K562 (cell line): ENCODE measurements at regions of chr1 and their contacts with region 1.

Region 1: DNA sequence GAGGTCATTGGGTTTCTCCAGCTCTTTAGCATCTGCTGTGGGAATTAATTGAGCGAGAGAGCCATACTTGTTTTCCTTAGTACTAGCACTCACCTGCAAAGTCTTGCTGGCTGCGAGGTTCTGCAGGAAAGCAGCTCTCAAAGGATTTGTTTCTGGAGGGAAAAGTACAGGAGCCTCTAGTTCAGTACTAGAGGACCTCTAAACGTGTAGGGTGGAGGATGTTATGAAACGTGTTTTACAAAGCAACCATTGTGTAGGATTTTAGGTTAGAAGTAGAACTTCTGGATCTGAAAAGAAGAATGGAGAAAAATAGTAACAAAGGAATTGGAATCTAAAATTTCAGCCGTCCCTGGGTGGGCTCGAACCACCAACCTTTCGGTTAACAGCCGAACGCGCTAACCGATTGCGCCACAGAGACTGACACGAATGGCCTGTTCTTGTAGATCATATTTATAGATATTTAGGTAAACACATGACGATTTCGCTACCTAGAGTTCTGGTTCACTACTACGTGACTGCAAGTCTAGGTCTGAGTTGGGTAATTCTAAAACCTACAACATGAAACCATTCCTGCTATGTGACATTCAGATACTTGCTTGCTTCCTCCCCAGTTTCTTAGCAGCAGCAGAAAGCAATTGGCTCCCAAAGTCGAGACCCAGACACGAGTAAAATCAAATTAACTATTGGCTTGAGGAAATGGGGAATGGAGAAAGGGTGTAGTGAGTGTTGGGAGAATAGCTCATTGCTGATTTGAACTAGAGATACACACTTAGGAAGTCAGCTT is 60.2 kb upstream of the CFAP126 start:
- DNase-seq: peak; percentile 48 to 81 (median 56)
- ATAC-seq: peak; percentile 90
- H3K4me3 ChIP-seq: peak overlapping the region; percentile 42
- H3K27ac ChIP-seq: peak overlapping the region; percentile 76
- H3K4me1 ChIP-seq: peaks cover 0 to 4% of the 10 kb centered on the region in 2 experiments; a peak in 2 of 5 replicates
- H3K27me3 ChIP-seq: no peaks in the 10 kb centered on the region
- CTCF ChIP-seq: 0 out of 6 replicates have a peak, but pooled peaks of 1 of the 3 experiments have one; percentile 8
- EP300 ChIP-seq: peak; percentile 80
- POLR2A ChIP-seq: no peak
- RAD21 ChIP-seq: 0 out of 4 replicates have a peak, but pooled peaks of 1 of the 2 experiments have one; percentile 18

Region 2: DNA sequence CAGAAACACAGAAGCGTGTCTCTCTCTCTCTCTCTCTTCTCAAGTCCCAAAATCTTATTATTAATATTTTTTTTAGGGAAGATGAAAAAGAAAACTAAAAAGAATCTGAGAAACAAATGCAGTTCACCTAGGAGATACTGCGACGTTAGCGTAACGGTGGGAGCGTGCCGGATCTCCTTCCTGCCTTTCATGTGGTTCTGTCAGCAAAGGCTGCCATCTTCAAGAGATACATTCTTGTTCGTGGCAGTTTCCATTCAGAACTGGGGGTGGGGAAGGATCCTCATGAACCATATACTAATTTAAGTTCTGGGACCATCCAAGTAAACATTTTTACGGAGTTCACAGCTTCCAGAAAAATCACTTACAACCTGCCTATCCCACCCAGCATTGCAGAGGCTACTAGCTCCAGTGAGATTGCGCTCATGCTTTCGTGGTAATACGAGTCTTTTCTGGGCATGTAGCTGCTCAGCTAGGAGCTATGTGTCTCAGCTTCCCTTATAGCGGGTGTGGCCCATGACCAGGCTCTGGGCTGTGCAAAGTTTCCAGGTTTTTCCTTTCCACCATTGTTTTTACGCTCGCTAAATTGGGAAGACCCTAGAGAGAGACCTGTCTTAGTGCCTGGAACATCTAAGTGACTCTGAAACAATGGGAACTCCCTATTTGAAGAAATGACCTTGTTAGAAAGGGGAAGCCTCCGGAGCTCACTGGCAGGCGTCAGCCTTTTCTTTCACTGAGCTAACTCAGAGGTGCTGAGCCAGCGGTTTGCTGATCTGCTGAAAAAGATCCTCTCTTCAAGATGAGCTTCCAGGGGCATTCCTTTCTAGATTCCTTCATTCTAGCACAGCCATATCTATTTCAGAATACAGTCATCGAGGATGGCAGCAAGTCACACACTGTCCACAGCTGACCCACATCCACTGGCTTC is 798.4 kb before region 1 on chr1:
- CTCF ChIA-PET with region 1: no interaction called
- POLR2A ChIA-PET with region 1: no interaction called
- in situ Hi-C with region 1: no loop called
- intact Hi-C with region 1: no loop called
- DNase-seq: no peak
- ATAC-seq: peak; percentile 31; the same call in 2 of the 3 replicates
- H3K4me3 ChIP-seq: no peak overlapping the region
- H3K27ac ChIP-seq: no peak overlapping the region
- H3K4me1 ChIP-seq: peaks cover 15 to 48% of the 10 kb centered on the region in 2 experiments; a peak in 4 of 5 replicates
- H3K27me3 ChIP-seq: no peaks in the 10 kb centered on the region
- CTCF ChIP-seq: no peak
- EP300 ChIP-seq: no peak
- POLR2A ChIP-seq: no peak
- RAD21 ChIP-seq: no peak

Region 3: GRCh38 chr1:161359291-161359690 is 68.6 kb before region 1 on chr1:
- CTCF ChIA-PET with region 1: no interaction called
- POLR2A ChIA-PET with region 1: no interaction called
- in situ Hi-C with region 1: no loop called
- intact Hi-C with region 1: no loop called
- DNase-seq: no peak
- ATAC-seq: no peak
- H3K4me3 ChIP-seq: no peak overlapping the region
- H3K27ac ChIP-seq: no peak overlapping the region
- H3K4me1 ChIP-seq: no peaks in the 10 kb centered on the region
- H3K27me3 ChIP-seq: no peaks in the 10 kb centered on the region
- CTCF ChIP-seq: no peak
- EP300 ChIP-seq: no peak
- POLR2A ChIP-seq: no peak
- RAD21 ChIP-seq: no peak

Region 4: DNA sequence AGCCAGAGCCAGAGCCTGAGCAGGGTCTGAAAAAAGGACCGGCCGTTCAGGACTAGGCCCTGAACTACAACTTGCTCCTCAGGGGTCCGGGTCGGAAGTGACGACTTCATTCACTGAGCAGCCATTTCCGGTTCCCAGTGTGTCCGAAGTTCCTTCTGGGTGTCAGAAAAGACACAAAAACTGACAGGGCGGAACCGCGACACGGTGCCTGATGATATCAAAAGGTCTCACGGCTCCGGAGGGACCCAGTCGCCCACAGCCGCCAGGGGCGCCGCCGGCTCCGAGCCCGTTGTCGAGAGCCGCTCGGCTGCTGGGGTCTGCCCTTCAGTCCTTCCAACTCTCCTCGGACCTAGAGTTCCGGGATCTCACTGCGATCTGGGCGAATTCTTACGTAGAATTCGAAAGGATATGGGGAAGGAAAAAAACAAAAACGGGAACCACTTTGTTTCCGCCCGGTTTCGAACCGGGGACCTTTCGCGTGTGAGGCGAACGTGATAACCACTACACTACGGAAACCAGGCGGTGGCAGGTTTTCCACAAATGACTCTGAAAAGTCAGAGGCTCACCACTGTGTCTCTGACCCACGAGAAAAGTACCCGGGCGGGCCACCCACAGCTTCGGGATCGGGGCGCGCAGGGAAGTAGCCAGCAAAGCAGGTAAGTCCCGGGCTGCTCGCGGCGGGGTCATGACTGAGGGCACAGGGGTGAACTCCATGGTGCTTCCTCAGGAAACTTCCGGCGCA is 28.5 kb before region 1 on chr1:
- CTCF ChIA-PET with region 1: no interaction called
- POLR2A ChIA-PET with region 1: interaction called, 6 read pairs
- in situ Hi-C with region 1: no loop called
- intact Hi-C with region 1: loop called (anchors 1 kb)
- DNase-seq: peak; percentile 83 to 96 (median 86)
- ATAC-seq: peak; percentile 87
- H3K4me3 ChIP-seq: peak overlapping the region; percentile 67
- H3K27ac ChIP-seq: peak overlapping the region; percentile 97
- H3K4me1 ChIP-seq: peaks cover 10 to 16% of the 10 kb centered on the region in 2 experiments; a peak in 4 of 5 replicates
- H3K27me3 ChIP-seq: no peaks in the 10 kb centered on the region
- CTCF ChIP-seq: peak; percentile 68 to 87 (median 80)
- EP300 ChIP-seq: peak; percentile 70
- POLR2A ChIP-seq: peak; percentile 95
- RAD21 ChIP-seq: peak; percentile 30 to 46; a peak in 2 of 4 replicates

Region 5: GRCh38 chr1:161440312-161440894 is 12.5 kb after region 1 on chr1:
- CTCF ChIA-PET with region 1: no interaction called
- POLR2A ChIA-PET with region 1: interaction called, 20 read pairs
- in situ Hi-C with region 1: no loop called
- intact Hi-C with region 1: no loop called
- DNase-seq: peak; percentile 82 to 89 (median 86)
- ATAC-seq: peak; percentile 79
- H3K4me3 ChIP-seq: peak overlapping the region; percentile 89
- H3K27ac ChIP-seq: peak overlapping the region; percentile 90
- H3K4me1 ChIP-seq: peaks cover 5 to 18% of the 10 kb centered on the region in 2 experiments; a peak in 4 of 5 replicates
- H3K27me3 ChIP-seq: no peaks in the 10 kb centered on the region
- CTCF ChIP-seq: peak; percentile 72 to 88 (median 75)
- EP300 ChIP-seq: no peak
- POLR2A ChIP-seq: peak; percentile 51; the same call in 1 of the 2 replicates
- RAD21 ChIP-seq: peak; percentile 8 to 36; a peak in 2 of 4 replicates

Region 6: DNA sequence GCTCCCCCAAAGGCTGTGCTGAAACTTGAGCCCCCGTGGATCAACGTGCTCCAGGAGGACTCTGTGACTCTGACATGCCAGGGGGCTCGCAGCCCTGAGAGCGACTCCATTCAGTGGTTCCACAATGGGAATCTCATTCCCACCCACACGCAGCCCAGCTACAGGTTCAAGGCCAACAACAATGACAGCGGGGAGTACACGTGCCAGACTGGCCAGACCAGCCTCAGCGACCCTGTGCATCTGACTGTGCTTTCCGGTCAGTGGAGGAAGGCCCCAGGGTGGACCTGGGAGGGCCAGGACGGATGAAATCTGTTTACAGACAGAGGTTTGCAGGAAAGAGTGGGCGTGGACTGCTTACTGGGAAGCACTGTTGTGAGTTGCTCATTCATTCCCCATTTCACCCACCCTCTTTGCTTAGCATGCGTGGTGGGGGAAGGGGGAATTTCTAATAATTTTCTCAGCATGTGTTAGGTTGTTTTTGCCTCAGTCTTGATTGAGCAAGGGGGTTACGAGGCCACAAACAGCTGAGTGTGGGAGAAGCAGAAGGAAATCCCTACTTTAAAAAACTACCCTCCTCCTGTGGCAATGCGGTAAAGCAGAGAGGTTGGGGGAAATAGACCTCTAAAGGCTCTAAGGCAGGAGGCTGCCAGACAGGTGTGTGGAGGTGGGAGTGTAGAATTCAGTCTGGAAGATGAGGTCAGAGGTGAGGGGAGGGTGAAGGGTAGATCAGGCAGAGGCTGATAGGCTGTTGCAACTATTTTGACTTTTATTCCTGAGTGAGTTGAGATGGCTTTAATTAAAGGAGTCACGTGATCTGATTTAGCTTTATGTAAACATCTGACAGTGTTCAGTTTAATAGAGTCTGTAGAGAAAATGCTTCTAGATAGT is 78.7 kb after region 1 on chr1:
- CTCF ChIA-PET with region 1: no interaction called
- POLR2A ChIA-PET with region 1: no interaction called
- in situ Hi-C with region 1: no loop called
- intact Hi-C with region 1: no loop called
- DNase-seq: peak; percentile 50 to 85 (median 54)
- ATAC-seq: peak; percentile 79
- H3K4me3 ChIP-seq: peak overlapping the region; percentile 51
- H3K27ac ChIP-seq: peak overlapping the region; percentile 87
- H3K4me1 ChIP-seq: peaks cover 16 to 53% of the 10 kb centered on the region in 2 experiments
- H3K27me3 ChIP-seq: no peaks in the 10 kb centered on the region
- CTCF ChIP-seq: no peak
- EP300 ChIP-seq: 0 out of 2 replicates have a peak, but pooled peaks have one; percentile 11
- POLR2A ChIP-seq: peak; percentile 50
- RAD21 ChIP-seq: no peak